ENCODE measurements at regions of chr22 and their contacts with region 1.

Region 1: DNA sequence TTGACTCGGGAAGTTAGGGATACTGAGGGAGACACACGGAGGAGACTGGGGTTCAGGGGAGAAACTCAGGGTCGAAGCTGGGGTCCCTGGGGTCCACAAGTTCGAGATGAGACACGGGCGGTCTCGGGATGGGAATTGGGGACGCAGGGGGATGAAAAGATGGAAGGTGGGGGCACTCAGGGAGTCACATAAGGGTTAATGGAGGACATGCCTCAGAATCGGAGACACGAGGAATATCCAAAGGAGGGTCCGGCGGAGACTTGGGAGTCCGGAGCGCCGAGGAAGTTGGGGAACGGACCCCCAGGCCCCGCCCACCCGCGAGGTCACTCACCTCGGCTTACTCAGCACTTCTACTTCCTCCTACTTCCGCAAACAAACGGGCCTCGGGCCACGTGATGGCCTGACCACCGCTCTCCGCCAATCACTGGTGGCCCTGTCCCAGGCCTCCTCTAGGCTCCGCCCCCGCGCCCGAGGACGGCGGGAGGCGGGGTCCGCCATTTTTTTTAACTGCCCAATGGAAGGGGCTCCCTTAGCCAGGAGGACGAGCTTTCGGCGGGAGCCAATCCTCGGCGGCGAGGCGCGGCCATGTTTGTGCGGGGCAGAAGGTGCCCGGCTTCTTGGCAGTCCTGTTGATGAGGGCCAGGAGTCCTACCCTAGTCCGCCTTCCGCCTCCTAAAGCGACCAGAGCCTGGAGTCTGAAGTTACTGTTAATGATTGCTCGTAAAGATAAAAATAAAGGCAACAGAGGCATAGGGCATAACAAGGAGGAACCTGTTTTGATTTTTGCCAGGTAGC is at the start of gene PLA2G6:
- DNase-seq: peak; percentile 99
- ATAC-seq: peak; percentile 91
- H3K4me3 Mint-ChIP-seq: peak within 1 kb of the TSS; percentile 95
- H3K27ac Mint-ChIP-seq: peak within 1 kb of the TSS; percentile 91
- H3K4me1 Mint-ChIP-seq: peaks cover 43% of the 10 kb centered on the region
- H3K27me3 Mint-ChIP-seq: peaks cover 5% of the 10 kb centered on the region
- total RNA-seq, gene PLA2G6: 94.6 to 103 TPM

Region 2: GRCh38 chr22:38193580-38193979 is 11.9 kb after region 1 on chr22:
- POLR2A ChIA-PET with region 1: interaction called, 13 read pairs
- DNase-seq: no peak
- ATAC-seq: no peak
- H3K4me3 Mint-ChIP-seq: no peak overlapping the region
- H3K27ac Mint-ChIP-seq: no peak overlapping the region
- H3K4me1 Mint-ChIP-seq: peaks cover 14% of the 10 kb centered on the region
- H3K27me3 Mint-ChIP-seq: peaks cover 3% of the 10 kb centered on the region

Region 3: GRCh38 chr22:38201710-38202436 is 20.2 kb after region 1 on chr22 and contains the start of gene MAFF:
- POLR2A ChIA-PET with region 1: interaction called, 78 read pairs
- DNase-seq: peak; percentile 90
- ATAC-seq: peak; percentile 72
- H3K4me3 Mint-ChIP-seq: peak within 1 kb of the TSS; percentile 90
- H3K27ac Mint-ChIP-seq: peak within 1 kb of the TSS; percentile 98
- H3K4me1 Mint-ChIP-seq: peaks cover 34% of the 10 kb centered on the region
- H3K27me3 Mint-ChIP-seq: no peaks in the 10 kb centered on the region
- total RNA-seq, gene MAFF: 10.8 to 12.8 TPM